ENCODE measurements at regions of chr1 and their contacts with region 1.

Region 1: GRCh38 chr1:38834937-38835827 is 24.4 kb downstream of the RRAGC start:
- DNase-seq: peak in 1 of 5 donors; percentile 55
- ATAC-seq: peak; percentile 60 to 88 (median 80)
- H3K4me3 ChIP-seq: no peak overlapping the region
- H3K27ac ChIP-seq: no peak overlapping the region
- H3K4me1 ChIP-seq: peaks cover 0 to 18% (median 9%) of the 10 kb centered on the region in 12 donors
- H3K27me3 ChIP-seq: peaks cover 0 to 21% (median 0%) of the 10 kb centered on the region in 9 donors
- CTCF ChIP-seq: peak; percentile 64 to 86 (median 80)
- POLR2A ChIP-seq: no peak

Region 2: GRCh38 chr1:37595440-37596319 is 1239.5 kb before region 1 on chr1 and contains the start of gene GNL2:
- intact Hi-C with region 1: loop called in 3 of 10 experiments (anchors 10 kb)
- DNase-seq: peak; percentile 97 to 99 (median 98)
- ATAC-seq: peak; percentile 100
- H3K4me3 ChIP-seq: peak within 1 kb of the TSS; percentile 61 to 88 (median 74)
- H3K27ac ChIP-seq: peak within 1 kb of the TSS in 11 of 12 donors; percentile 50 to 84 (median 75)
- H3K4me1 ChIP-seq: peaks cover 2 to 24% (median 16%) of the 10 kb centered on the region in 12 donors
- H3K27me3 ChIP-seq: no peaks in the 10 kb centered on the region
- CTCF ChIP-seq: no peak
- POLR2A ChIP-seq: peak in 1 of 2 donors; percentile 78
- total RNA-seq, gene GNL2: 19.4 to 29.7 (median 23.8) TPM

Region 3: DNA sequence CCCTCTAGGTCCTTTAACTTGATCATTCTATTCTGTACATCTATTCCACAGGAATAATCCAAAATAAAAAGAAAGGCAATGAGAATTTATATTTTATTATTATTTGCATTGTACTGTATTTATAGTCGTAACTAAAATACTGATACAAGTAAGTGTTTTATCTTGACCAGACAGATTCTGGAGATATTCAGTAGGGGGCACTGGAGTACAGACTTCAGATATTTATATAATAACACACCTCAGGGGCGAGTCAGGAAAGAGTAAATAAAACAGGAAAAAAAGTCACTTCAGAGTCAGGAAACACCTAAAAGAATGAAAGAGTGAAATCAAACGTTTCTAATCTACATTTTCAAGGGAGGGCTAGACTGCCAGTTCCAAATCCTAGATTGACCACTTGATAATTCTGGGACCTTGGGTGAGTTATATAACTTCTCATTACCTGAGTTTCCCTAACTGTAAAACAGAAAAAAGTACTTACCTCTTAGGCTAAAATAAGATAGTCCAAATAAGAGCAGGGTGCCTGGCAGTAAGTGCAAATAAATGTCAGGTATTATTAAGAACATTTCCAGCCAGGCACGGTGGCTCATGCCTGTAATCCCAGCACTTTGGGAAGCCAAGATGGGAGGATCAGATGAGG is 944.7 kb before region 1 on chr1:
- intact Hi-C with region 1: loop called in 1 of 10 experiments (anchors 10 kb)
- DNase-seq: no peak
- ATAC-seq: no peak
- H3K4me3 ChIP-seq: no peak overlapping the region
- H3K27ac ChIP-seq: peak overlapping the region in 1 of 12 donors; percentile 35
- H3K4me1 ChIP-seq: peaks cover 0 to 3% (median 0%) of the 10 kb centered on the region in 12 donors
- H3K27me3 ChIP-seq: no peaks in the 10 kb centered on the region
- CTCF ChIP-seq: peak in 11 of 12 donors; percentile 31 to 68 (median 49)
- POLR2A ChIP-seq: no peak

Region 4: GRCh38 chr1:38026592-38027200 is 808.5 kb before region 1 on chr1:
- intact Hi-C with region 1: loop called in 5 of 10 experiments (anchors 5 to 10 kb)
- DNase-seq: no peak
- ATAC-seq: no peak
- H3K4me3 ChIP-seq: no peak overlapping the region
- H3K27ac ChIP-seq: no peak overlapping the region
- H3K4me1 ChIP-seq: peaks cover 0 to 40% (median 21%) of the 10 kb centered on the region in 12 donors
- H3K27me3 ChIP-seq: no peaks in the 10 kb centered on the region
- CTCF ChIP-seq: peak; percentile 37 to 63 (median 51)
- POLR2A ChIP-seq: no peak

Region 5: GRCh38 chr1:38102636-38103035 is 732.5 kb before region 1 on chr1:
- intact Hi-C with region 1: no loop called
- DNase-seq: no peak
- ATAC-seq: no peak
- H3K4me3 ChIP-seq: no peak overlapping the region
- H3K27ac ChIP-seq: no peak overlapping the region
- H3K4me1 ChIP-seq: no peaks in the 10 kb centered on the region
- H3K27me3 ChIP-seq: peaks cover 0 to 10% (median 0%) of the 10 kb centered on the region in 9 donors
- CTCF ChIP-seq: no peak
- POLR2A ChIP-seq: no peak

Region 6: GRCh38 chr1:38608202-38608864 is 226.8 kb before region 1 on chr1:
- intact Hi-C with region 1: loop called in 3 of 10 experiments (anchors 1 to 5 kb)
- DNase-seq: peak in 3 of 5 donors; percentile 22 to 36 (median 36)
- ATAC-seq: peak in 2 of 4 donors; percentile 37 to 60
- H3K4me3 ChIP-seq: no peak overlapping the region
- H3K27ac ChIP-seq: no peak overlapping the region
- H3K4me1 ChIP-seq: no peaks in the 10 kb centered on the region
- H3K27me3 ChIP-seq: peaks cover 0 to 27% (median under 1%) of the 10 kb centered on the region in 9 donors
- CTCF ChIP-seq: peak; percentile 33 to 72 (median 44)
- POLR2A ChIP-seq: no peak

Measured in heart left ventricle (tissue), 16 donors.